ENCODE measurements at regions of chr1 and their contacts with region 1.

Region 1: GRCh38 chr1:225474986-225475820 is 47.4 kb upstream of the LBR start:
- DNase-seq: peak; percentile 74 to 90
- H3K4me3 ChIP-seq: peak overlapping the region in 1 of 4 donors; percentile 11
- H3K27ac ChIP-seq: no peak overlapping the region
- H3K4me1 ChIP-seq: peaks cover 5 to 13% (median 12%) of the 10 kb centered on the region in 4 donors
- H3K27me3 ChIP-seq: no peaks in the 10 kb centered on the region
- CTCF ChIP-seq: peak in 6 of 7 experiments; percentile 100
- EP300 ChIP-seq: no peak
- POLR2A ChIP-seq: no peak

Region 2: DNA sequence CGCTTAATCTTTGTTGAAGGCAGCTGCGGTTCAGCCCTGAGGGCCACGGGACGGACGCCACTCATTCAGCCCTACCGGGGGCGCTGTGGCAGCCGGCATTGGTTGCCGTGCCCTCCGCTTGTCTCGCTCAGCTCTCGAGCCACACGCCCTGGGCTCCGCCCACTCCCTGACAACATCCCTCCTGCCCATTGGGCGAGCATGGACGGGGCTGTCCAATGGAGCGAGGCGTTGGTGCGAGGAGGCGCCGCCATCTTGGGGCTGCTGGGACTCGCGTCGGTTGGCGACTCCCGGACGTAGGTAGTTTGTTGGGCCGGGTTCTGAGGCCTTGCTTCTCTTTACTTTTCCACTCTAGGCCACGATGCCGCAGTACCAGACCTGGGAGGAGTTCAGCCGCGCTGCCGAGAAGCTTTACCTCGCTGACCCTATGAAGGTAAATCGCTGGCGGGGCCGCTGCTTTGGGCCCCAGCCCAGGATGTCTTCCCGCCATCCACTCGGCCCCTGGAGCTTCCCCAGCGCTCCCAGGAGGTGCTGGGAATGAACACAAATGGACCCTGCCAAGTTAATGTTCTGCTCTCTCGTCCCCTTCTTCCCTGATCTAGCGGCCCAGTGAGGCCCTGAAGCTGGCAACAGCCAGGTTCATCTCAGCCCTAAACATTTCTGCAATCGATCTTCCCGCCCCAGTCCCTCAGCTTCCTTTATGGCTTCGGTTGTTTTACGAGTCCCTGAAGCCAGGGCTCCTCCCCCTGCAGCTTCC is 302.6 kb after region 1 on chr1 and contains the start of gene SRP9:
- intact Hi-C with region 1: loop called (anchors 10 kb)
- DNase-seq: peak; percentile 99 to 100
- H3K4me3 ChIP-seq: peak within 1 kb of the TSS; percentile 63 to 78 (median 68)
- H3K27ac ChIP-seq: peak within 1 kb of the TSS; percentile 91 to 97 (median 93)
- H3K4me1 ChIP-seq: peaks cover 26 to 88% (median 59%) of the 10 kb centered on the region in 4 donors
- H3K27me3 ChIP-seq: no peaks in the 10 kb centered on the region
- CTCF ChIP-seq: peak in 6 of 7 experiments; percentile 13 to 95 (median 82)
- EP300 ChIP-seq: no peak
- POLR2A ChIP-seq: peak in 2 of 4 donors; percentile 39 to 56
- total RNA-seq, gene SRP9: 68.9 to 269 (median 130) TPM

Region 3: DNA sequence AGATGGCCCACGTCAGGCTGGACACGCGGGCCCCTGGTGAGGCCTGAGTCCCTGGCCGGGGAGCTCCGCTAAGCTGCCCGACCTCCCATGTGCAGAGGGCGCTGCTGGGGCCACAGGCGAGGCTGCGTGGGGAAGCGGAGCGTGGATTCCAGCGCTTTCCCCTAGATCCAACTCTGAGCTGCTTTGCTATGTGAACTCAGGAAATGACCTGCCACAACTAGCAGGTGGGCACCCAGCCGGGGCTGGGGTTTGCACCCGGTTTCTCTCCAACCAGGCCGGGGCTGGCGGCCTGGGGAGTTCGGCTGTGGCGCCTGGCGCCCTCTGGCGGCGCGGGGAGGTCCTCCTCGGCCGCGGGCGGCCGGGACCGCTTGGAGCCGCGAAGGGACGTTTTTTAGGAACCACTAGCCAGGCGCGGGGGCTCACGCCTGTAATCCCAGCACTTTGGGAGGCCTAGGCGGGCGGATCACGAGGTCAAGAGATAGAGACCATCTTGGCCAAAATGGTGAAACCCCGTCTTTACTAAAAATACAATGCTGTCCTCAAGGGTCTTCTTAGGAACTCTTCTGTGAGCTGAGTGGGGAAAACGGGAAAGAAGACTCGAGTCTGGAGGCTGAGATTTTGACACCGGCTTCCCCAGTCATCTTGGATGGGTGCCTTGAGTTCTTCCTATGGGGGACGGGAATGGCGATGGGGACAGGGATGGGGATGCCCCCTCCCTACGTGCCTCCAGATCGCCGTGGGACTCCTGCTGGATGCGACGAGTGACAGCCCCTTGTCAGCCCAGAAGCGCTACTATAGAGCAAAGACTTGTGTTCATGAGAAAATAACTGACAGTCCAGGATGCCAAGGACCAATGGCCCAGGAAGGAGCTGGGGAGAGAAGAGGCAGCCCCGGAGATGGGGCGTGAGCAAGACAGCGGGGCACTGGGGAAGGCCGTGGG is 436.3 kb after region 1 on chr1:
- intact Hi-C with region 1: loop called (anchors 10 kb)
- DNase-seq: peak; percentile 78 to 88
- H3K4me3 ChIP-seq: no peak overlapping the region
- H3K27ac ChIP-seq: peak overlapping the region in 2 of 5 donors; percentile 2 to 8
- H3K4me1 ChIP-seq: peaks cover 0 to 41% (median 15%) of the 10 kb centered on the region in 4 donors
- H3K27me3 ChIP-seq: no peaks in the 10 kb centered on the region
- CTCF ChIP-seq: peak in 5 of 7 experiments; percentile 78 to 94 (median 88)
- EP300 ChIP-seq: no peak
- POLR2A ChIP-seq: no peak

Region 4: GRCh38 chr1:225977937-225978748 is 502.9 kb after region 1 on chr1:
- intact Hi-C with region 1: loop called (anchors 5 kb)
- DNase-seq: no peak
- H3K4me3 ChIP-seq: no peak overlapping the region
- H3K27ac ChIP-seq: no peak overlapping the region
- H3K4me1 ChIP-seq: peaks cover 0 to 6% (median 2%) of the 10 kb centered on the region in 4 donors
- H3K27me3 ChIP-seq: no peaks in the 10 kb centered on the region
- CTCF ChIP-seq: no peak
- EP300 ChIP-seq: no peak
- POLR2A ChIP-seq: no peak

Measured in stomach (tissue), 19 donors.